OCI-LY7 (cell line): ENCODE measurements at regions of chr4 and their contacts with region 1.

Region 1: DNA sequence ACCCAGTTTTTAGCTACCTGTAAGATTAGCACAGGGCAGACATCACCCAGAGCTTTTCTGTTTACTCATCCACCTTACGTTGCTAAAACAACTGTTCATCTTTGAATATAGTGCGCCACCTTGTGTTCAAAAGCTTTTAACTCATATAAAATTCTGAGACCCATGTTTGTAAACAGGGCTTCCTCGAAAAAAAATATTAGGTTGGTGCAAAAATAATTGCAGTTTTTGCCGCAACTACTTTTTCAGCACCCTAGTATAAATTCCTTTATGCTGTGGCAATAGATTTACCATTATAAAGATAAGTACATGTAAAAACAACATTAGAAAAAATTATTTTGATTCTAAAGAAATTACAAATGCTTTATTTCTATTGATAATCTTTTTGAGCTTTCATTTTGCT is 147.9 kb downstream of the LRBA start:
- DNase-seq: peak; percentile 83
- H3K4me3 ChIP-seq: no peak overlapping the region
- H3K27ac ChIP-seq: no peak overlapping the region
- H3K4me1 ChIP-seq: no peaks in the 10 kb centered on the region
- CTCF ChIP-seq: peak; percentile 91

Region 2: GRCh38 chr4:149980941-149981340 is 886.2 kb before region 1 on chr4:
- CTCF ChIA-PET with region 1: no interaction called
- POLR2A ChIA-PET with region 1: interaction called, 3 read pairs
- intact Hi-C with region 1: loop called (anchors 10 kb)
- DNase-seq: peak; percentile 43
- H3K4me3 ChIP-seq: no peak overlapping the region
- H3K27ac ChIP-seq: no peak overlapping the region
- H3K4me1 ChIP-seq: no peaks in the 10 kb centered on the region
- CTCF ChIP-seq: peak; percentile 89

Region 3: DNA sequence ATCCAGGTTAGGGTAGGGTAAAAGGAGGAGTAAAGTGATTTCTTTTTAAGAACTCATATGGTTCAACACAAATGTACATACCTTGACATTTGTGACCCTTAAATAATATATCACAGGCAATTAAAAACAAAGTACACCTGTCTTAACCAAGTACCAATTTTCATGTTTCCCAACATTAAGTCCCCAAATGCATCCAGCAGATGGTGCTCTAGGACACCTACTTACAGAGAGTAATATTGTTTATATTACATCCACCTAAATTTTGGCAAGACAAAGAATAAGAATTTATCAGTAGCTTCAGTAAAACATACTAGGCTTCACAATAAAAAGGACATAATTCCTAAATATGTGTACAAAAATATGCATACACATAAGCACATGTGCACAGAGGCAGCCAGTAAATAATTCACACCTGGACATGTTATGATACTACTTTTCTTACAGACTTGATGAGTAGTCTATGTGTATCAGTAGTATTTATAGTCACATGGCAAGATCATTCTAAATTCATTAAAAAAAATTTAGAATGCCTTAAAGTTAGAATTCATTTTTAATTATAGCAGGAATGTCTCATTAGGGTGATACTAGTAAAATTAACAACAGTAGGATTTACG is 569.2 kb before region 1 on chr4:
- CTCF ChIA-PET with region 1: interaction called, 3 read pairs
- POLR2A ChIA-PET with region 1: interaction called, 4 read pairs
- intact Hi-C with region 1: loop called (anchors 1 kb)
- DNase-seq: peak; percentile 48
- H3K4me3 ChIP-seq: no peak overlapping the region
- H3K27ac ChIP-seq: no peak overlapping the region
- H3K4me1 ChIP-seq: no peaks in the 10 kb centered on the region
- CTCF ChIP-seq: peak; percentile 90

Region 4: DNA sequence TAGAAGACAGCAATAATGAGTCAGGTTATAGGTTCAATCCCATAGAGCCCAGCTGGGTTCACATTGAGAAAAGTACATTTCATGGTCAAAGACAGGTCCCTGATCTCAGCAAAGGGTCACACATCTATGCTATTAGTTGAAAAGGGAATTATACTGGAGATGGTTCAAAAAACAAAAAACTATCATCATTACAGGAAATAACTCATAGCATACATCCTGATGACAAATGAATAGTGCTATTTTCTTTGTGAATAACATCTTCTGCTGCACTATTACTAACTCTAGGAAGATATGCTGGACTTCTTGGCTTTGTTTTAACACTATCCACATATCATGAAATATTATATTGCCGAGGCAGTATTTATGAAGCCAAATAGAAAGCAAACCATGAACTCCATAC is 487.7 kb before region 1 on chr4:
- CTCF ChIA-PET with region 1: no interaction called
- POLR2A ChIA-PET with region 1: no interaction called
- intact Hi-C with region 1: no loop called
- DNase-seq: no peak
- H3K4me3 ChIP-seq: no peak overlapping the region
- H3K27ac ChIP-seq: no peak overlapping the region
- H3K4me1 ChIP-seq: no peaks in the 10 kb centered on the region
- CTCF ChIP-seq: no peak

Region 5: GRCh38 chr4:150746156-150746555 is 121.0 kb before region 1 on chr4:
- CTCF ChIA-PET with region 1: no interaction called
- POLR2A ChIA-PET with region 1: no interaction called
- intact Hi-C with region 1: no loop called
- DNase-seq: no peak
- H3K4me3 ChIP-seq: no peak overlapping the region
- H3K27ac ChIP-seq: no peak overlapping the region
- H3K4me1 ChIP-seq: no peaks in the 10 kb centered on the region
- CTCF ChIP-seq: no peak